Colonic mucosa (tissue), 4 donors: ENCODE measurements at regions of chr3 and their contacts with region 1.

Region 1: DNA sequence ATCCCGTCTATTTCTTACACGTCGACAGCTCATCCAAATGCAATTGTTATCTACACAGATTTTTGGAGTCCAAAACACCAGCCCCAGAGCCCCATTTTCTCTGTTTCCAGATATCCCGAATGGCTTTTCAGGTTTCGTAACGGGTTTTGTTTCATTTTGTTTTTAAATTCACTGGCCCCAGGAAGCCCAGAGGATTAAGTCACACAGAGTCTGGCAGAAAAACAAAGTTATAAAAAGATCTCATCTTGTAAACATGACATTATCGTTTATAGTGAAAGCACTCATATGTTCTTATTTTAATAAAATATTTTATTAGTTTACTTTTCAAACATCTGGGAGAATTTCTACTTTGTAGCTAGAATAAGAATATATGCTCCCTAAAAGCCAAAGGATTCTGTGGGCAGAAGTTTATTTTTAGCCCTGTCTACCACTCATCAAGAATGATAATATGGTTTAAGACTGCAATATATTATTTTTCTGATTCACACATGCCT is 149.3 kb upstream of the SLC2A2 start:
- DNase-seq: no peak
- H3K4me3 ChIP-seq: no peak overlapping the region
- H3K27ac ChIP-seq: peak overlapping the region; percentile 11
- H3K4me1 ChIP-seq: no peaks in the 10 kb centered on the region
- H3K27me3 ChIP-seq: no peaks in the 10 kb centered on the region
- CTCF ChIP-seq: no peak

Region 2: GRCh38 chr3:171436380-171436779 is 260.6 kb after region 1 on chr3:
- intact Hi-C with region 1: no loop called
- DNase-seq: no peak
- H3K4me3 ChIP-seq: no peak overlapping the region
- H3K27ac ChIP-seq: no peak overlapping the region
- H3K4me1 ChIP-seq: no peaks in the 10 kb centered on the region
- H3K27me3 ChIP-seq: no peaks in the 10 kb centered on the region
- CTCF ChIP-seq: no peak

Region 3: DNA sequence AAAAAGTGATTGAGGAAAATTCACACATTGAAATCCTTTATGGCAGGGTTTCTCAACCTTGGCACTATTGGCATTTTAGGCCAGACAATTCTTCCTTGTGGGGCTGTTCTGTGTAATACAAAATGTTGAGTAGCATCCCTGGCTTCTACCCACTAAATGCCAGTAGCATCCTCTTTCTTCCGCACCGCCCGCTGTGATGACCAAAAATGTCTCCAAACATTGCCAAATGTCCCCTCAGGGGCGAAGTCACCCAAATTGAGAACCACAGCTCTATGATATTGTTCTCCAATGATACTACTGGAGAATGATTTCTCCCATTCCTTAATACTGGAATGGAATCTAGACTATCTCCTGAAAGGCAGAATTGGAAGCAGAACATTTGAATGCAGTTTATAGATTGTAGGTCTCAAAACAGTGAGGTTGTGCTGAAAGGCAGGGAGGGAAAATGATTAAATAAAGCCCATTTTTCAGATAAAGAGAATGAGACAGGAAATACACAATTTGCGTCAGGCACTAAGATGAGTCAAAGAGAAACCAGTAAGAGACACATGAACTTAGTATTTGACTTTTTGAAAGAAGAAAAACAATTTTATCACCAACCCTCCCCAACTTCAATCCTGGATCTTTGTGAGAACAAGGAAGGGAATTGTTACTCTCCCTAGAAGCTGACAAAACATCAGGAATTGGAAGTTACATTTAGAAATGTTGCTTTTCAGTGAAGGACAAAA is 386.0 kb after region 1 on chr3:
- intact Hi-C with region 1: loop called (anchors 5 kb)
- DNase-seq: no peak
- H3K4me3 ChIP-seq: no peak overlapping the region
- H3K27ac ChIP-seq: no peak overlapping the region
- H3K4me1 ChIP-seq: no peaks in the 10 kb centered on the region
- H3K27me3 ChIP-seq: no peaks in the 10 kb centered on the region
- CTCF ChIP-seq: no peak